ENCODE measurements at regions of chr1 and their contacts with region 1.

Region 1: GRCh38 chr1:59457786-59458185 is 160.9 kb downstream of the FGGY start:
- DNase-seq: no peak
- H3K4me3 ChIP-seq: no peak overlapping the region
- H3K27ac ChIP-seq: no peak overlapping the region
- H3K4me1 ChIP-seq: no peaks in the 10 kb centered on the region
- H3K27me3 ChIP-seq: no peaks in the 10 kb centered on the region
- CTCF ChIP-seq: no peak
- POLR2A ChIP-seq: no peak

Region 2: GRCh38 chr1:59477867-59478266 is 20.1 kb after region 1 on chr1:
- intact Hi-C with region 1: loop called (anchors 2 kb)
- DNase-seq: no peak
- H3K4me3 ChIP-seq: no peak overlapping the region
- H3K27ac ChIP-seq: no peak overlapping the region
- H3K4me1 ChIP-seq: no peaks in the 10 kb centered on the region
- H3K27me3 ChIP-seq: no peaks in the 10 kb centered on the region
- CTCF ChIP-seq: no peak
- POLR2A ChIP-seq: no peak